OCI-LY7 (cell line): ENCODE measurements at regions of chr2 and their contacts with region 1.

Region 1: DNA sequence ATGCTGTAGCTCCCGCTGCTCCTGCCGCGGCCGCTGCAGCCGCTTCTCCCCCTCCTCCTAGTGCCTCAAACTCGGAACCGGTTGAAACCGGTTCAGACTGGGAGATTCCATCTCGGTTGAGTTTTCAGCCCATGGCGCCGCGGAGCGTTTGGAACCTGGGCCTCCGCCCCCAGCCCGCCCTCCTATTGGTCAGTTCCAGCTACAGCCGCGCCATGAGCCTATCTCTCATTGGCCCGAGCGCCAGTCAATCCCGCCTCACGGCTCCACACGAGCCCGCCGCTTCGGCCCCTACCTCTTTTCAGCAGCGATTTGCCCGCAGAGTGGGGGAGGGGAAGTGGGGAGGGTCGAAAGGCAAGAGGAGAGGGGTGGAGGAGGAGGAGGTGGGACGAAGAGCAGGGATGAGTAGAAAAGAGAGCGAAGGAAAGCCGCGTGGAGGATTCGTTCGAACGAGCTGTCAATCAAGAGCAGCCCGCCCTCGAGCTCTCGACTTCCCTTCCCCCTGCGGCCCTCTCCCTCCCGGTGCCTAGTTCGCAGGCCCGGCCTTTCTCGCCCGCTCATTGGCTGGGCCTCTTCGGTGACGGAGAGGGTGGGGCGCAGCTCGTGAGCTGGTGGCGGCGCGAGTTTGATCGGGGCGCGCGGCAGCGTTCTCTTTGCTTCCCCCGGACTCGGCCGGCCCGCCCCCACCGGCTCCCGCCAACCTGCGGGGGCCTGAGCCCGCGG is at the start of gene XPO1:
- DNase-seq: peak; percentile 100
- H3K4me3 ChIP-seq: peak within 1 kb of the TSS; percentile 84
- H3K27ac ChIP-seq: peak within 1 kb of the TSS; percentile 89
- H3K4me1 ChIP-seq: peaks cover 32% of the 10 kb centered on the region
- CTCF ChIP-seq: no peak
- total RNA-seq, gene XPO1: 164 and 177 TPM in 2 replicates

Region 2: GRCh38 chr2:60756191-60757041 is 781.9 kb before region 1 on chr2 and contains the start of gene PAPOLG:
- CTCF ChIA-PET with region 1: no interaction called
- POLR2A ChIA-PET with region 1: interaction called, 14 read pairs
- intact Hi-C with region 1: no loop called
- DNase-seq: peak; percentile 98
- H3K4me3 ChIP-seq: peak within 1 kb of the TSS; percentile 92
- H3K27ac ChIP-seq: peak within 1 kb of the TSS; percentile 67
- H3K4me1 ChIP-seq: peaks cover 17% of the 10 kb centered on the region
- CTCF ChIP-seq: no peak
- total RNA-seq, gene PAPOLG: 9.6 and 15.0 TPM in 2 replicates

Region 3: GRCh38 chr2:61176755-61177726 is 361.3 kb before region 1 on chr2:
- CTCF ChIA-PET with region 1: no interaction called
- POLR2A ChIA-PET with region 1: interaction called, 3 read pairs
- intact Hi-C with region 1: loop called (anchors 5 kb)
- DNase-seq: peak; percentile 93
- H3K4me3 ChIP-seq: peak overlapping the region; percentile 91
- H3K27ac ChIP-seq: peak overlapping the region; percentile 46
- H3K4me1 ChIP-seq: peaks cover 32% of the 10 kb centered on the region
- CTCF ChIP-seq: peak; percentile 24; the same call in 1 of the 2 replicates

Region 4: GRCh38 chr2:61411109-61411508 is 127.3 kb before region 1 on chr2:
- CTCF ChIA-PET with region 1: no interaction called
- POLR2A ChIA-PET with region 1: no interaction called
- intact Hi-C with region 1: no loop called
- DNase-seq: no peak
- H3K4me3 ChIP-seq: no peak overlapping the region
- H3K27ac ChIP-seq: no peak overlapping the region
- H3K4me1 ChIP-seq: peaks cover 23% of the 10 kb centered on the region
- CTCF ChIP-seq: no peak

Region 5: GRCh38 chr2:61426267-61426897 is 112.0 kb before region 1 on chr2:
- CTCF ChIA-PET with region 1: interaction called, 4 read pairs
- POLR2A ChIA-PET with region 1: interaction called, 5 read pairs
- intact Hi-C with region 1: loop called (anchors 1 kb)
- DNase-seq: peak; percentile 89
- H3K4me3 ChIP-seq: peak overlapping the region; percentile 57
- H3K27ac ChIP-seq: peak overlapping the region; percentile 98
- H3K4me1 ChIP-seq: peaks cover 85% of the 10 kb centered on the region
- CTCF ChIP-seq: peak; percentile 90

Region 6: DNA sequence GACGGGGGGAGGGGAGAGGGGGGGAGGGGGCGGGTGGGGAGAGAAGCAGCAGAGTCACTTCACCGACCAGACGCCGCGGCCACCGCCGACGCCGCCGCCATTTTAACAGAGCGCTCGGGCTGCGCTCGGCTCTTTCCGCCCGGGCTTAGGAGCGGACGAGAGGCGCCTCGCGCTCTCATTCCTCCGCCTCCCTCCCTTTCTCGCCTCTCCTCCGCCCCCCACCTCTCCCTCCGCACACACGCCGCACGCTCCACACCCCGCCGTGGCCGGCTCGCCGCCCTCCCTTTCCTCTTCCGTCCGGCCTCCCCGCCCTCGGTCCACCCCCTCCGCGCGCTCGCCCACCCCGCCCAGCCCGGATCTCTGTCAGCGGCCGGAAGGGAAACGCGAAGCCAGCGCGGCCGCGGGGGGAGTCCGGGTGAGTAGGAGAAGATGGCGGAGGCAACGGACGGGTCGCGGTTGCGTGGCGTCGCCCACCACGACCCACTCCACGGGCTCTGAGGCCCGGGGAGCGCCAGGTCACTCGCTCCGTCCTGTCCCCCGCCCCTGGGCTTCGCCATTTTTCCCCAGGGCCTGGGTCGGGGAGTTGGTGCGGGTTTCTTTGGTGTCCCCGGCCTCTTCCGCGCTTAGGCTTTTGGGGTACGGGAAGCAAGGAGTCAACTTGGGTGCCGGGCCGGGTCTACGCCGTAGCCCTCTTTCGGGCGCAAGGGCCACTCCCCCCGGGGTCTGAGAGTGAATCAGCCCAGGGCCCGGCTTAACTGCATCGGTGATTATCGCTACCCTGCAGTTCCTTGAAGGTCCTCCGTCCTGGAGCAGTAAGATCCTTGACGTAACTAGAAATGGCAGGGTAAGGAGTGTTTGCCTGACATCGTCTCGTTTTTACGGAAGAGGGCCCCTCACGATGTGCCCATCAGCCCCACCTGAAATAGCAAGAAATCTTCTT is 67.1 kb before region 1 on chr2 and contains the start of gene USP34:
- CTCF ChIA-PET with region 1: no interaction called
- POLR2A ChIA-PET with region 1: interaction called, 4 read pairs
- intact Hi-C with region 1: loop called (anchors 2 kb)
- DNase-seq: peak; percentile 92
- H3K4me3 ChIP-seq: peak within 1 kb of the TSS; percentile 91
- H3K27ac ChIP-seq: peak within 1 kb of the TSS; percentile 90
- H3K4me1 ChIP-seq: peaks cover 32% of the 10 kb centered on the region
- CTCF ChIP-seq: no peak
- total RNA-seq, gene USP34: 147 and 192 TPM in 2 replicates